ENCODE measurements at regions of chr9 and their contacts with region 1.

Region 1: DNA sequence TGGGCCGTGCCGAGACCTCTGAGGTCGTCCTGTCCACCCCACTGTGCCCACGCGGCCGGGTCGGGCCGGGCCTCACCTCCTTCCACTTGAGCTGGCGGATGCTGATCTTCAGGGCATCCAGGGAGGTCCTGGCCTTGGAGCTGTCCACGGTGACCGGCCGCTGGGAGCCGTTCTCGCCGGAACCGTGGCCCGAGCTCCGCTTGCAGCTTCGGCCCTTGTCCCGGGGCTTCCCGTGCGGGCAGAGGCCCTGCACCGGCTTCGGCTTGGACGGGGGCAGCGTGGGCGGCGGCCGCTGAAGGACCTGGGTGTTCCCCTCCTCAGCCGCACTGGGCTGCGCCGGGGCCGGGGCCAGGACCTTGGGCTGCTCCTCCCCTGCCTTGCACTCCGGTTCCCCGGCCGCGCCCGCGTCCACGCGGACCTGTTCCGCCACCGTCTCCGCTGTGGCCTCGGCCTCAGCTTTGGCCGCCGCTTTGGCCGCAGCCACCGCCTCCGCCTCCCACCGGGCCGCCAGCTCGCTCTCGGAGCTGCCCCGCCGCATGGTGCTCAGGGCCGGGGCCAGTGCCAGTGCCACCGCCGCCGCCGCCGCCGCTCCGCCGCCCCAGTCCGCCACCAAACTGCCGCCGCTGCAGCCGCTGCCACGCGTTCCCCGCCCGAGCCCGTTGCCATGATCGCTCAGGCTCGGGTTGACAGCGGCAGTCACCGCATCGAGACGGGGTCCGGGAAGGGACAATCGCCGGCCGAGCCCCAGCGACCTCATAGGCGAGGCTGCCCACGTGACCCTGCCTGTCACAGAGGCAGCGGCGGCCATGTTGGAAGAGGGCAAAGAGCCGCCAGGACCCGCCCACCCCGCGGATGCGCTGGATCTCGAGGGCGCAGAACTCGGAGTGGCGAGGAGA is at the start of gene TTLL11:
- DNase-seq: peak; percentile 49 to 95
- H3K4me3 ChIP-seq: peak within 1 kb of the TSS; percentile 49 to 77 (median 66)
- H3K27ac ChIP-seq: no peak within 1 kb of the TSS
- H3K4me1 ChIP-seq: peaks cover 0 to 6% (median 0%) of the 10 kb centered on the region in 4 experiments; a peak in 4 of 7 replicates
- H3K27me3 ChIP-seq: peaks cover 0 to 19% (median 13%) of the 10 kb centered on the region in 4 experiments; a peak in 5 of 7 replicates
- CTCF ChIP-seq: no peak
- EP300 ChIP-seq: no peak
- POLR2A ChIP-seq: no peak
- RAD21 ChIP-seq: no peak
- total RNA-seq, gene TTLL11: 0.80 and 0.86 TPM in 2 replicates

Region 2: DNA sequence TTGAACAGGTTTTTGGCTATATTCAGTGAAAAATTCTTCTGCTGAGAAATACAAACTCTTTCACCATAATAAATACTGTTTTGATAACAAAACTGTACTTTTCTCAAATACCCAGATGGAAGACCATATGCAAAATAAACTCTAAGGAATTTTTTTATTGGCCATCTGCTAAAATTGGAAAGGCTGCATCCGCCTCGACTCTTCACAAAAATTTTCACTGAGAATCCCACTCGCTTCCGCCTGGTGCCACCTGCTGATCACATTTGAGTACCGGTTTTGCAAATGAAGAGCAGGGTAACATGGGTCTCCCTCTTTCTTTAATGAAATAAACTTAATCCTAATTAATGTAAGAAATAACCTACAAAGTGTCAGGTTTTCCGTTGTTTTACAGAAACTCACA is 76.1 kb before region 1 on chr9:
- CTCF ChIA-PET with region 1: no interaction called
- POLR2A ChIA-PET with region 1: no interaction called
- DNase-seq: no peak
- H3K4me3 ChIP-seq: no peak overlapping the region
- H3K27ac ChIP-seq: no peak overlapping the region
- H3K4me1 ChIP-seq: peaks cover 0 to 22% (median 12%) of the 10 kb centered on the region in 4 experiments; a peak in 5 of 7 replicates
- H3K27me3 ChIP-seq: no peaks in the 10 kb centered on the region; a peak in 1 of 7 replicates
- CTCF ChIP-seq: peak in 2 of 3 experiments; percentile 3 to 27; a peak in 2 of 4 replicates
- EP300 ChIP-seq: no peak
- POLR2A ChIP-seq: no peak
- RAD21 ChIP-seq: peak; percentile 42 to 49; a peak in 3 of 4 replicates

Region 3: GRCh38 chr9:122107291-122107805 is 14.5 kb after region 1 on chr9:
- CTCF ChIA-PET with region 1: interaction called, 94 read pairs
- POLR2A ChIA-PET with region 1: interaction called, 3 read pairs
- DNase-seq: no peak
- H3K4me3 ChIP-seq: no peak overlapping the region
- H3K27ac ChIP-seq: no peak overlapping the region
- H3K4me1 ChIP-seq: peaks cover 0 to 3% (median under 1%) of the 10 kb centered on the region in 4 experiments; a peak in 4 of 7 replicates
- H3K27me3 ChIP-seq: no peaks in the 10 kb centered on the region; a peak in 2 of 7 replicates
- CTCF ChIP-seq: no peak
- EP300 ChIP-seq: no peak
- POLR2A ChIP-seq: no peak
- RAD21 ChIP-seq: no peak

Region 4: DNA sequence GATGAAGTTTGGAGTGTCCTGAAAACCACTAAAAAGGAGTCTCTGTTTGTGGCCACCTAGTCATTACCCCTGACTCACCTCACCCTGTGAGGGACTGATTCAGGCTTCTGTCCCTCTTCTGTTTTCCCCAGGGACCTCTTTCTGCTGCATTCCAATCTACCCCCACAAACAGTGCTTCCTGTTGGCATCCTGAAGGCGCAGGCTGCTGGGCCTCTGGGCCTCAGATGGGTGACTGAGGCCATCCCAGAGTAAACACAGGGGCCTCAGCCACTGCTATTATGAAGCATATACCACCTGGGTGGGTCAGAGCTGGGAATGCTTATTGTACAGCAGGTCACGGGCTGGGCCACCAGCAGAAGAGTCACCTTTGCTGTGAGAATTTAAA is 86.8 kb after region 1 on chr9:
- CTCF ChIA-PET with region 1: no interaction called
- POLR2A ChIA-PET with region 1: no interaction called
- DNase-seq: no peak
- H3K4me3 ChIP-seq: no peak overlapping the region
- H3K27ac ChIP-seq: no peak overlapping the region
- H3K4me1 ChIP-seq: no peaks in the 10 kb centered on the region; a peak in 1 of 7 replicates
- H3K27me3 ChIP-seq: 0 out of 7 replicates have a peak, but pooled peaks cover 0 to 2% (median 0%) of the 10 kb centered on the region in 4 experiments
- CTCF ChIP-seq: no peak
- EP300 ChIP-seq: no peak
- POLR2A ChIP-seq: no peak
- RAD21 ChIP-seq: no peak

Measured in H1 (cell line).